Activated B cell treated with CpG ODN at 0.5 μM for 24 hours (primary cell): ENCODE measurements at regions of chr12 and their contacts with region 1.

Region 1: DNA sequence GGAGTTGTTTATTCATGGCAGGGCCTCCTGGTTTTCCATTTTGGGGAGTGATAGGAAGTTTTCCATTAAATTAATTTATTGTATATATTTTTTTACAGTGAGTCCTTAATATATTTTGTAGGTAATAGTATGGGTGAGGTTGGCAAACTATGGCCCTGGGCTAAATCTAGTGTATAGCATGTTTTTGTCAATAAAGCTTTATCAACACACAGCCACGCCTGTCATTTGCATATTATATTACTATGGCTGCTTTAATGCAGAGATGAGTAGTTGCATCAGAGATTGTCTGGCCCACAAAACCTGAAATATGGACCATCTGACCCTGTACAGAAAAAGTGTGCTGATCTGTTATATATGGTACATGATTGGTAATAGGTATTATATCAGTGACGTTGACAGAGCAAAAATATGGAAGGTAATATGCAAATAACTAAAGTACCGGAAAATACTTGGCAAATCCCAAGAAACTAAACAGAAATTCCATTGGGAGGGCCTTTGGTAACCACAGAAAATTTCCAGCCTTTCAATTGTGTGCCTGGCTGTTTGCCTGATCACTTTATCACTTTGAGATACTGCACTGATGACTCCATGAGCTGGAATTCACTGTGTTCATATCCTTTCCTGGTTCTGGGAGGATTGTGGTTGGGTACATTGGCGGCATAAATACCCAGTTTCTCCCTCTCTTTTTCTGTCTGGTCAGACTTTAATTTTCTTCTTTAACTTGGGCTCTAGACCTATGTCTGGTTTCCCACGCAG is 61.7 kb upstream of the RFLNA start:
- DNase-seq: no peak
- ATAC-seq: no peak
- H3K4me3 Mint-ChIP-seq: no peak overlapping the region
- H3K27ac Mint-ChIP-seq: no peak overlapping the region
- H3K4me1 Mint-ChIP-seq: no peaks in the 10 kb centered on the region
- H3K27me3 Mint-ChIP-seq: no peaks in the 10 kb centered on the region
- CTCF ChIP-seq: no peak

Region 2: GRCh38 chr12:123329799-123330198 is 903.4 kb before region 1 on chr12:
- CTCF ChIA-PET with region 1: no interaction called
- POLR2A ChIA-PET with region 1: no interaction called
- intact Hi-C with region 1: no loop called
- DNase-seq: no peak
- ATAC-seq: no peak
- H3K4me3 Mint-ChIP-seq: no peak overlapping the region
- H3K27ac Mint-ChIP-seq: no peak overlapping the region
- H3K4me1 Mint-ChIP-seq: no peaks in the 10 kb centered on the region
- H3K27me3 Mint-ChIP-seq: no peaks in the 10 kb centered on the region
- CTCF ChIP-seq: no peak

Region 3: GRCh38 chr12:123897221-123897620 is 336.0 kb before region 1 on chr12:
- CTCF ChIA-PET with region 1: no interaction called
- POLR2A ChIA-PET with region 1: no interaction called
- intact Hi-C with region 1: no loop called
- DNase-seq: no peak
- ATAC-seq: no peak
- H3K4me3 Mint-ChIP-seq: no peak overlapping the region
- H3K27ac Mint-ChIP-seq: no peak overlapping the region
- H3K4me1 Mint-ChIP-seq: no peaks in the 10 kb centered on the region
- H3K27me3 Mint-ChIP-seq: peaks cover 9% of the 10 kb centered on the region
- CTCF ChIP-seq: no peak

Region 4: GRCh38 chr12:124254126-124254525 is 20.9 kb after region 1 on chr12:
- CTCF ChIA-PET with region 1: no interaction called
- POLR2A ChIA-PET with region 1: no interaction called
- intact Hi-C with region 1: loop called (anchors 1 kb)
- DNase-seq: no peak
- ATAC-seq: no peak
- H3K4me3 Mint-ChIP-seq: no peak overlapping the region
- H3K27ac Mint-ChIP-seq: no peak overlapping the region
- H3K4me1 Mint-ChIP-seq: no peaks in the 10 kb centered on the region
- H3K27me3 Mint-ChIP-seq: peaks cover 18% of the 10 kb centered on the region
- CTCF ChIP-seq: no peak

Region 5: DNA sequence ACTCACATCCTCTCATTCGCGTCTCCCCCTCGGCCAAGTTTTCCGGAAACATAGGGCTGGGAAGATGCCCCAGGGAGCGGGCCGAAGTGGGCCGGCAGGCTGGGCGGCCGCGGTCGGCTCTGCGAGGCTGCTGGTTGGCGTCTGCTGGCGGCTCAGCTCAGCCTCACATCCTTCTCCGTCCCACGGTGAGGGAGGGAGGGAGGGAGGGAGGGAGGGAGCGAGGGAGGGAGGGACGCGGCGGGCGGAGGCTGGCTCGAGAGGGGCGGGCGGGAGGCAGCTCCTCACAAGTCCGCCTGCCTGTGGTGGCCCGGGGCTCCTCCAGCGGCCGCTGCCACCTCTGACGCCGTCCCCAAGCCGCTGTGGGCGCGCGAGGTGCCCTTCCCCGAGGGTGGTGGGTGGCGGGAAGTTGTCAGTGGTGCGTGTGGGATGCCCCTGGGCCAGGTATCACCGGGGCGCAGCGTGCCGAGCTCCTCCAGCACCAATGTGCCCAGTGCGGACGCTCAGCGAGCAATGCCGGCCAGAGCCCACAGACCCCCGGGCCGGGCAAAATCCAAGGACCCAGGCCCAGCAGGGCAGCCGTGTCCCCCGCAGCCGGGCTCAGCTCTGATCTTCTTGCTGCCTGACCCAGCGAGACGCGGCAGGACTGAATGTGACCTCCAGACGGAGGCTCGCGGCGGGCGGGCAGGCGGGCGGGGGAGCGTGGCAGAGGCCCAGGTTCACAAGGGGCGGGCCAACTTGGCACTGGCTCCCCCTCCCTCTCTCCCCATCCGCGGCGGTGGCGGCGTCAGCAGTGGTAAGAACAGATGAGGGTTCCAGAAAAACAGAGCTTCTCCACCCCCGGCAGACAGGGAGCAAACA is 155.7 kb after region 1 on chr12:
- CTCF ChIA-PET with region 1: no interaction called
- POLR2A ChIA-PET with region 1: no interaction called
- intact Hi-C with region 1: no loop called
- DNase-seq: peak; percentile 42
- ATAC-seq: peak; percentile 39
- H3K4me3 Mint-ChIP-seq: peak overlapping the region; percentile 56
- H3K27ac Mint-ChIP-seq: no peak overlapping the region
- H3K4me1 Mint-ChIP-seq: peaks cover 47% of the 10 kb centered on the region
- H3K27me3 Mint-ChIP-seq: no peaks in the 10 kb centered on the region
- CTCF ChIP-seq: no peak